ENCODE measurements at regions of chr11 and their contacts with region 1.

Region 1: GRCh38 chr11:95150946-95151684 is 61.5 kb downstream of the ENDOD1 start:
- DNase-seq: peak; percentile 81 to 87 (median 82)
- ATAC-seq: peak; percentile 77
- H3K4me3 ChIP-seq: no peak overlapping the region
- H3K27ac ChIP-seq: no peak overlapping the region
- H3K4me1 ChIP-seq: peaks cover 45 to 48% of the 10 kb centered on the region in 2 experiments
- H3K27me3 ChIP-seq: no peaks in the 10 kb centered on the region
- CTCF ChIP-seq: peak; percentile 80 to 93 (median 85); a peak in 5 of 6 replicates
- EP300 ChIP-seq: no peak
- POLR2A ChIP-seq: no peak
- RAD21 ChIP-seq: no peak; a peak in 1 of 4 replicates

Region 2: GRCh38 chr11:94623120-94623735 is 527.9 kb before region 1 on chr11:
- CTCF ChIA-PET with region 1: no interaction called
- POLR2A ChIA-PET with region 1: no interaction called
- in situ Hi-C with region 1: loop called (anchors 10 kb)
- intact Hi-C with region 1: loop called (anchors 5 kb)
- DNase-seq: peak; percentile 66 to 84 (median 70)
- ATAC-seq: peak; percentile 99
- H3K4me3 ChIP-seq: no peak overlapping the region
- H3K27ac ChIP-seq: no peak overlapping the region
- H3K4me1 ChIP-seq: no peaks in the 10 kb centered on the region; a peak in 1 of 5 replicates
- H3K27me3 ChIP-seq: no peaks in the 10 kb centered on the region
- CTCF ChIP-seq: peak; percentile 67 to 94 (median 93)
- EP300 ChIP-seq: no peak
- POLR2A ChIP-seq: no peak
- RAD21 ChIP-seq: peak; percentile 98 to 100

Region 3: DNA sequence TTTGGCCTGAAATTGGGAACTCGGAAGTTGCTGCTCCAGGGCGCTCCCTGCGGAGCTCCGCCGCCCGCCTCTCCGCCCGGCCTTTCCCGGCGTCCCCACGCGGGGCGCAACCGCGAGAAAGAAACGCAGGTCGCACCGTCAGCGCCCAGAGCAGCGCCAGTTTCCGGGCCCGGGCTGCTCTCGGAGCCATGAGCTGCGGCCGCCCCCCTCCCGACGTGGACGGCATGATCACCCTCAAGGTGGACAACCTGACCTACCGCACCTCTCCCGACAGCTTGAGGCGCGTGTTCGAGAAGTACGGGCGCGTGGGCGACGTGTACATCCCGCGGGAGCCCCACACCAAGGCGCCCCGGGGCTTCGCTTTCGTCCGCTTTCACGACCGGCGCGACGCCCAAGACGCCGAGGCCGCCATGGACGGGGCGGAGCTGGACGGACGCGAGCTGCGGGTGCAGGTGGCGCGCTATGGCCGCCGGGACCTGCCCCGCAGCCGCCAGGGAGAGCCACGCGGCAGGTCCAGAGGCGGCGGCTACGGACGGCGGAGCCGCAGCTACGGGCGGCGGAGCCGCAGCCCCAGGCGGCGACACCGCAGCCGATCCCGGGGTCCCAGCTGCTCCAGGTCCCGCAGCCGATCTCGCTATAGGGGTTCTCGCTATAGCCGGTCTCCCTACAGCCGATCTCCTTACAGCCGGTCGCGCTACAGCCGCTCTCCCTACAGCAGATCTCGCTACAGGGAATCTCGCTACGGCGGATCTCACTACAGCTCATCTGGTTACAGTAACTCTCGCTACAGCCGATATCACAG is 83.9 kb before region 1 on chr11:
- CTCF ChIA-PET with region 1: interaction called, 5 read pairs
- POLR2A ChIA-PET with region 1: interaction called, 29 read pairs
- in situ Hi-C with region 1: no loop called
- intact Hi-C with region 1: loop called (anchors 2 kb)
- DNase-seq: peak; percentile 64 to 88 (median 68)
- ATAC-seq: peak; percentile 87
- H3K4me3 ChIP-seq: peak overlapping the region; percentile 86
- H3K27ac ChIP-seq: peak overlapping the region; percentile 94
- H3K4me1 ChIP-seq: peaks cover 0 to 5% of the 10 kb centered on the region in 2 experiments; a peak in 3 of 5 replicates
- H3K27me3 ChIP-seq: no peaks in the 10 kb centered on the region
- CTCF ChIP-seq: peak; percentile 63 to 98 (median 87)
- EP300 ChIP-seq: no peak
- POLR2A ChIP-seq: peak; percentile 87
- RAD21 ChIP-seq: peak in 1 of 2 experiments; percentile 43; a peak in 3 of 4 replicates

Region 4: DNA sequence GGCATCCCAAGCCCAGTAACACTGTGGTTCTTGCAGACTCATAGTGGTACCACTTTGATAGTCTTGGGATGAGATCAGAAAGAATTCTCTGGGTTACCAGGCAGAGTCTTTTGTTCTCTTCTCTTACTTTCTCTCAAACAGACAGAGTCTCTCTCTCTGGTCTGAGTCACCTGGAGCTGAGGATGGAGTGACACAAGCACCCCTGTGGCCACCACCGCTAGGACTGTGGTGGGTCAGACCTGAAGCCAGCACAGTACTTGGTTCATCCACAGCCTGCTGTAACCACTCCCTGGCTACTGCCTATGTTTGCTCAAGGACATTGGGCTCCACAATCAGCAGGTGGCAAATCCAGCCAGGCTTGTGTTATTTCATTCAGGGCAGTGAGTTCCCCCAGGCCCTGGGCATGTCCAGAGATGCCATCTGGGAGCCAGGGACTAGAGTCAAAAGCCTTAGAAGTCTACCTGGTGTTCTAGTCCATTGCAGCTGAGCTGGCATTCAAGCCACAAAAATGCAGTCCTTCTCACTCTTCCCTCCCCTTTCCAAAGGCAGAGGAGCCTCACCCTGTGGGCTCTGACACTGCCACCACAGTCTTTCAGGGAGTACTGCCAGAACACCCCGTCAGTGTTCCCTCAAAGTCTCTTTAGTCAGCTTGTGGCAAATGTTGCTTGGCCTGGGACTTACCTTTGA is 31.6 kb before region 1 on chr11:
- CTCF ChIA-PET with region 1: no interaction called
- POLR2A ChIA-PET with region 1: no interaction called
- in situ Hi-C with region 1: no loop called
- intact Hi-C with region 1: no loop called
- DNase-seq: no peak
- ATAC-seq: no peak
- H3K4me3 ChIP-seq: no peak overlapping the region
- H3K27ac ChIP-seq: no peak overlapping the region
- H3K4me1 ChIP-seq: peaks cover 6 to 7% of the 10 kb centered on the region in 2 experiments; a peak in 1 of 5 replicates
- H3K27me3 ChIP-seq: no peaks in the 10 kb centered on the region
- CTCF ChIP-seq: no peak
- EP300 ChIP-seq: no peak
- POLR2A ChIP-seq: no peak
- RAD21 ChIP-seq: no peak

Region 5: GRCh38 chr11:95231127-95231880 is 80.2 kb after region 1 on chr11 and contains the start of gene SESN3:
- CTCF ChIA-PET with region 1: no interaction called
- POLR2A ChIA-PET with region 1: interaction called, 3 read pairs
- in situ Hi-C with region 1: no loop called
- intact Hi-C with region 1: loop called (anchors 2 kb)
- DNase-seq: peak; percentile 96 to 98 (median 97)
- ATAC-seq: peak; percentile 98
- H3K4me3 ChIP-seq: peak within 1 kb of the TSS; percentile 63
- H3K27ac ChIP-seq: peak within 1 kb of the TSS; percentile 65
- H3K4me1 ChIP-seq: peaks cover 4 to 14% of the 10 kb centered on the region in 2 experiments; a peak in 4 of 5 replicates
- H3K27me3 ChIP-seq: 0 out of 5 replicates have a peak, but pooled peaks cover 0 to 5% of the 10 kb centered on the region in 2 experiments
- CTCF ChIP-seq: no peak; a peak in 1 of 6 replicates
- EP300 ChIP-seq: no peak
- POLR2A ChIP-seq: no peak
- RAD21 ChIP-seq: peak in 1 of 2 experiments; percentile 27; a peak in 3 of 4 replicates
- polyA plus RNA-seq, gene SESN3: 0.44 to 0.48 TPM

Region 6: GRCh38 chr11:95364324-95365295 is 213.5 kb after region 1 on chr11:
- CTCF ChIA-PET with region 1: no interaction called
- POLR2A ChIA-PET with region 1: no interaction called
- in situ Hi-C with region 1: no loop called
- intact Hi-C with region 1: loop called (anchors 10 kb)
- DNase-seq: no peak
- ATAC-seq: no peak
- H3K4me3 ChIP-seq: no peak overlapping the region
- H3K27ac ChIP-seq: no peak overlapping the region
- H3K4me1 ChIP-seq: no peaks in the 10 kb centered on the region
- H3K27me3 ChIP-seq: peaks cover 0 to 6% of the 10 kb centered on the region in 2 experiments; a peak in 2 of 5 replicates
- CTCF ChIP-seq: no peak
- EP300 ChIP-seq: no peak
- POLR2A ChIP-seq: no peak
- RAD21 ChIP-seq: no peak

Region 7: DNA sequence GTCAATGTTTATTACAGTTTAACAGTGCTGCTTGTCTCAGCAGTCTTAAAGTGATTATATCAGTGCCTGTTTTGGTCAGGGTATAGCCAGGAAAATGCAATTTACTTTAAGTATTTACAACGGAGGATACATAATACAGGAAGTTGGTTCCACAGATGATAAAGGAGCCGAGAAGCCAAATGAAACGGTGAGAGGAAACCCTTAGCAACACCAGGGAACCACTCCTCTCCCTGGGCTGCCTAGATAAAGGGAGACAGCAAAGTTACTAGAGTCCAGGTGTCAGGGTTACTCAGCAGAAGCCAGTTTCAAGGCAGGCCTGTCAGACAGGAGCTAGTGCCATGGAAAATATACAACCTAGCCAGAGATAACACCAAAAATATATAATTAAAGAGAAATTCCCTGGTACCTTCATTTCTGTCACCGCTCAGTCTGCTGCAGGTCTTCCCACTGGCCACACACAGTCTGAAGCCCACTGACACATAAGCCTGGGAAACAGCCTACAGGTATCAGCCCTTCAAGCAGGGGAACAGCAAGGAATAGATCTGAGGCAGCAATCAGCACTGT is 583.0 kb after region 1 on chr11:
- CTCF ChIA-PET with region 1: no interaction called
- POLR2A ChIA-PET with region 1: no interaction called
- in situ Hi-C with region 1: no loop called
- intact Hi-C with region 1: loop called (anchors 1 kb)
- DNase-seq: peak; percentile 52 to 97 (median 76)
- ATAC-seq: peak; percentile 98
- H3K4me3 ChIP-seq: no peak overlapping the region
- H3K27ac ChIP-seq: peak overlapping the region; percentile 72
- H3K4me1 ChIP-seq: peaks cover 7 to 21% of the 10 kb centered on the region in 2 experiments; a peak in 4 of 5 replicates
- H3K27me3 ChIP-seq: no peaks in the 10 kb centered on the region
- CTCF ChIP-seq: no peak
- EP300 ChIP-seq: peak; percentile 97
- POLR2A ChIP-seq: no peak; the same call in 1 of the 2 replicates
- RAD21 ChIP-seq: 0 out of 4 replicates have a peak, but pooled peaks of 1 of the 2 experiments have one; percentile 18

Region 8: GRCh38 chr11:95790123-95790932 is 639.2 kb after region 1 on chr11 and contains the start of gene CEP57:
- CTCF ChIA-PET with region 1: no interaction called
- POLR2A ChIA-PET with region 1: interaction called, 12 read pairs
- in situ Hi-C with region 1: no loop called
- intact Hi-C with region 1: no loop called
- DNase-seq: peak; percentile 87 to 99 (median 90)
- ATAC-seq: peak; percentile 80
- H3K4me3 ChIP-seq: peak within 1 kb of the TSS; percentile 88
- H3K27ac ChIP-seq: peak within 1 kb of the TSS; percentile 99
- H3K4me1 ChIP-seq: peaks cover 4 to 14% of the 10 kb centered on the region in 2 experiments; a peak in 4 of 5 replicates
- H3K27me3 ChIP-seq: no peaks in the 10 kb centered on the region
- CTCF ChIP-seq: no peak
- EP300 ChIP-seq: no peak
- POLR2A ChIP-seq: peak; percentile 92
- RAD21 ChIP-seq: no peak
- polyA plus RNA-seq, gene CEP57: 25.1 to 33.9 TPM

Measured in K562 (cell line).